H1 (cell line): ENCODE measurements at regions of chr17 and their contacts with region 1.

Region 1: GRCh38 chr17:31068291-31068690 is 26.5 kb upstream of the NF1 start:
- DNase-seq: peak in 1 of 2 experiments; percentile 86
- H3K4me3 ChIP-seq: no peak overlapping the region
- H3K27ac ChIP-seq: no peak overlapping the region
- H3K4me1 ChIP-seq: peaks cover 0 to 3% (median 0%) of the 10 kb centered on the region in 4 experiments; a peak in 1 of 7 replicates
- H3K27me3 ChIP-seq: no peaks in the 10 kb centered on the region
- CTCF ChIP-seq: peak; percentile 71 to 98 (median 94)
- EP300 ChIP-seq: no peak
- POLR2A ChIP-seq: no peak
- RAD21 ChIP-seq: peak; percentile 71 to 79

Region 2: GRCh38 chr17:31052187-31052889 is 16.0 kb before region 1 on chr17:
- CTCF ChIA-PET with region 1: interaction called, 43 read pairs
- POLR2A ChIA-PET with region 1: interaction called, 3 read pairs
- DNase-seq: no peak
- H3K4me3 ChIP-seq: no peak overlapping the region
- H3K27ac ChIP-seq: no peak overlapping the region
- H3K4me1 ChIP-seq: no peaks in the 10 kb centered on the region
- H3K27me3 ChIP-seq: no peaks in the 10 kb centered on the region
- CTCF ChIP-seq: no peak
- EP300 ChIP-seq: no peak
- POLR2A ChIP-seq: no peak
- RAD21 ChIP-seq: no peak

Region 3: DNA sequence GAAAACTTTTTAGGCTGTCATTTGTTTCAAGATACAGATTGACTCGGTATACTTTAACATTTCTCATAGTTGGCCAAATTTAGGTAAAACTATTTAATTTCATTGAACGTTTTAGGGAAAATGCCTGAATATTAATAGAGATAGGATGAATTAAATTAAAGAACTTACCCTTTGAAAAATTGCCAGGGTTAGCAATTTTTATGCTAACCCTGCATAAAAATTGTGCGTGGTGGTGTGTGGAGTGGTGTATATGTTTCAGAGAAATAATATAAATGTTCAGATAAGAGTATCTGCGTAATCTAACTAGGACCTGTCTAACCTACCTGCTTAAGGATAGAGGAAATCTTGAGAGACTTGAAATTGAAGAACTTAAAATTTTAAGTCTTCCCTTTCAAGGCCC is 47.9 kb after region 1 on chr17:
- CTCF ChIA-PET with region 1: no interaction called
- POLR2A ChIA-PET with region 1: no interaction called
- DNase-seq: no peak
- H3K4me3 ChIP-seq: no peak overlapping the region
- H3K27ac ChIP-seq: no peak overlapping the region
- H3K4me1 ChIP-seq: peaks cover 0 to 2% (median 0%) of the 10 kb centered on the region in 4 experiments; a peak in 4 of 7 replicates
- H3K27me3 ChIP-seq: no peaks in the 10 kb centered on the region
- CTCF ChIP-seq: no peak
- EP300 ChIP-seq: no peak
- POLR2A ChIP-seq: no peak
- RAD21 ChIP-seq: no peak